HEK293T (cell line): ENCODE measurements at regions of chr2 and their contacts with region 1.

Region 1: GRCh38 chr2:41853427-41854216 is 194.2 kb upstream of the PKDCC start:
- DNase-seq: peak; percentile 59

Region 2: GRCh38 chr2:41720331-41720730 is 133.3 kb before region 1 on chr2:
- CTCF ChIA-PET with region 1: no interaction called
- POLR2A ChIA-PET with region 1: no interaction called
- DNase-seq: no peak

Region 3: GRCh38 chr2:41806286-41806685 is 47.3 kb before region 1 on chr2:
- CTCF ChIA-PET with region 1: no interaction called
- POLR2A ChIA-PET with region 1: no interaction called
- DNase-seq: no peak

Region 4: DNA sequence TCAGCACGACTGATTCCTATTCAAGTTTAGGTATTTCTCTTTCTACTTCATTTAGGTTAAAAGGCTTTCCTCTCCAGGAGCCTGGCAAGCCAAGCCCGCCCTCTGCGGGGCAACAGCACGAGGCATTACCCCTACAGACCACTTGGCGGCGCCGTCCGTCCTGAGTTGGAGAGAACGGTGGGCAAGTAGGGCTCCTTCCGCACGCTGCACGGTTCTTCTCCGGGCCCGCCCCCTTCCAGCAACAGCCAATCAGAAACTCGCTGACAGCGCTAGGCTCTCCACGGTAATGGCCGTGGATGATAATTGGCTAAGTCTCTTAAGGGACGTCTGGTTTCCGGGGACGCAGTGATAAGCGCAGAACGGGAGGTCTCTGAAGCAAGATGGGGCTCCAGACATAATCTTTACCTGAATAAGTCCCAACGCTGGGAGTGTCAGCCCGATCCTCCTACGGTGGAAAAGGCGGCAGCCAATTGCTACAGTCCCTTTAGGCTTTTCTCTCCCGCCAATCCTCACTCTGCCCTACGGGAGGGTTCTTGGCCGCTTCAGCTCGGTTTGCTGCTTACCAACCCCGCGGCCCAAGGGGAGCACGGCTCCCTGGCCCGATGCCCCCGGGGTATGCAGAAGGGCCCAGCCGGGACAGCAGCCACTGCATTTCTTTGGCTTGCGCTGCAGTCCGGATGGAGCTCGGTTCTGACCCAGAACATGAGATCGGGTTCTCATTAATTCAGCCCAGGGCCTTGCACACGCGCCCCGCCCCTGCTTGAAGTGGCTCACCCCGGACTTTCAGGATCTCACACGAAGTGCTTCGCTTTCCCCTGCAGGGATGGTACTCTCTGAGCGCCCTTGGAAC is 12.7 kb before region 1 on chr2:
- CTCF ChIA-PET with region 1: interaction called, 10 read pairs
- POLR2A ChIA-PET with region 1: interaction called, 4 read pairs
- DNase-seq: peak; percentile 96

Region 5: GRCh38 chr2:41869542-41870264 is 16.1 kb after region 1 on chr2:
- CTCF ChIA-PET with region 1: interaction called, 20 read pairs
- POLR2A ChIA-PET with region 1: interaction called, 3 read pairs
- DNase-seq: peak; percentile 81

Region 6: GRCh38 chr2:42086500-42086953 is 232.9 kb after region 1 on chr2:
- CTCF ChIA-PET with region 1: interaction called, 98 read pairs
- POLR2A ChIA-PET with region 1: no interaction called
- DNase-seq: peak; percentile 73